MCF 10A (cell line): ENCODE measurements at regions of chr1 and their contacts with region 1.

Region 1: DNA sequence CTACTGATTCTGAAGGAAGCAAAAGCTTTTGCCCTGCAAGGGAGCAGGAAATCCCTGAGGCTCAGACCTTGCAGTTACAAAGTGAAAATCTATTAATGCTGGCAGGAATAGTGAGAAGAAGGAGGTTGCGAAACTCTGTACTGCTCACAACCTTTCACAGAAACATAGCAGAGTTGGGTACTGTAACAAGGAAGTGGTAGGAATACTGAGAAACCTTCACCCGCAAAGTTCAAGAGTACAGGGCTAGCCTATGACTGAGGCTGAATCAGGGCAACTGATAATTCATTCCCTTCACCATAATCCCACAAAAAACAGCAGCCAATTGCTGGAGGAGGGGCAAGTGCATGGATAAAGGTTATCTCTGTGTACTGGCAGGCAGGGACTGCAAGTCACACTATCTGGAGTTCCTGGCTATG is 23.9 kb upstream of the KCTD3 start:
- DNase-seq: peak; percentile 79
- H3K4me3 Mint-ChIP-seq: no peak overlapping the region
- H3K27ac Mint-ChIP-seq: peak overlapping the region; percentile 24
- H3K4me1 Mint-ChIP-seq: peaks cover 35% of the 10 kb centered on the region
- H3K27me3 Mint-ChIP-seq: no peaks in the 10 kb centered on the region
- CTCF ChIP-seq: no peak

Region 2: GRCh38 chr1:215556996-215557395 is 13.8 kb after region 1 on chr1:
- CTCF ChIA-PET with region 1: interaction called, 13 read pairs
- POLR2A ChIA-PET with region 1: interaction called, 7 read pairs
- intact Hi-C with region 1: no loop called
- DNase-seq: no peak
- H3K4me3 Mint-ChIP-seq: no peak overlapping the region
- H3K27ac Mint-ChIP-seq: no peak overlapping the region
- H3K4me1 Mint-ChIP-seq: no peaks in the 10 kb centered on the region
- H3K27me3 Mint-ChIP-seq: no peaks in the 10 kb centered on the region
- CTCF ChIP-seq: no peak